Endothelial cell of umbilical vein (primary cell): ENCODE measurements at regions of chr3 and their contacts with region 1.

Region 1: GRCh38 chr3:69410250-69410649 is 24.4 kb upstream of the FRMD4B start:
- DNase-seq: peak; percentile 89
- H3K4me3 ChIP-seq: no peak overlapping the region
- H3K27ac ChIP-seq: no peak overlapping the region
- H3K4me1 ChIP-seq: peaks cover 27% of the 10 kb centered on the region
- H3K27me3 ChIP-seq: no peaks in the 10 kb centered on the region
- CTCF ChIP-seq: peak; percentile 83 to 90
- POLR2A ChIP-seq: no peak

Region 2: GRCh38 chr3:69051756-69052471 is 358.3 kb before region 1 on chr3 and contains the start of gene TMF1:
- CTCF ChIA-PET with region 1: no interaction called
- POLR2A ChIA-PET with region 1: no interaction called
- dilution Hi-C with region 1: no loop called
- intact Hi-C with region 1: no loop called
- DNase-seq: peak; percentile 99
- H3K4me3 ChIP-seq: peak within 1 kb of the TSS; percentile 47 to 94 (median 85)
- H3K27ac ChIP-seq: peak within 1 kb of the TSS; percentile 76
- H3K4me1 ChIP-seq: peaks cover 14% of the 10 kb centered on the region
- H3K27me3 ChIP-seq: no peaks in the 10 kb centered on the region
- CTCF ChIP-seq: no peak
- POLR2A ChIP-seq: peak; percentile 84
- total RNA-seq, gene TMF1: 32.3 and 32.7 TPM in 2 replicates

Region 3: GRCh38 chr3:69226076-69226475 is 184.2 kb before region 1 on chr3:
- CTCF ChIA-PET with region 1: no interaction called
- POLR2A ChIA-PET with region 1: no interaction called
- dilution Hi-C with region 1: no loop called
- intact Hi-C with region 1: no loop called
- DNase-seq: no peak
- H3K4me3 ChIP-seq: no peak overlapping the region
- H3K27ac ChIP-seq: no peak overlapping the region
- H3K4me1 ChIP-seq: no peaks in the 10 kb centered on the region
- H3K27me3 ChIP-seq: no peaks in the 10 kb centered on the region
- CTCF ChIP-seq: no peak
- POLR2A ChIP-seq: no peak

Region 4: GRCh38 chr3:69240651-69241568 is 169.3 kb before region 1 on chr3:
- CTCF ChIA-PET with region 1: no interaction called
- POLR2A ChIA-PET with region 1: interaction called, 3 read pairs
- dilution Hi-C with region 1: no loop called
- intact Hi-C with region 1: loop called (anchors 5 kb)
- DNase-seq: peak; percentile 80
- H3K4me3 ChIP-seq: no peak overlapping the region
- H3K27ac ChIP-seq: peak overlapping the region; percentile 90
- H3K4me1 ChIP-seq: peaks cover 66% of the 10 kb centered on the region
- H3K27me3 ChIP-seq: no peaks in the 10 kb centered on the region
- CTCF ChIP-seq: no peak
- POLR2A ChIP-seq: no peak

Region 5: DNA sequence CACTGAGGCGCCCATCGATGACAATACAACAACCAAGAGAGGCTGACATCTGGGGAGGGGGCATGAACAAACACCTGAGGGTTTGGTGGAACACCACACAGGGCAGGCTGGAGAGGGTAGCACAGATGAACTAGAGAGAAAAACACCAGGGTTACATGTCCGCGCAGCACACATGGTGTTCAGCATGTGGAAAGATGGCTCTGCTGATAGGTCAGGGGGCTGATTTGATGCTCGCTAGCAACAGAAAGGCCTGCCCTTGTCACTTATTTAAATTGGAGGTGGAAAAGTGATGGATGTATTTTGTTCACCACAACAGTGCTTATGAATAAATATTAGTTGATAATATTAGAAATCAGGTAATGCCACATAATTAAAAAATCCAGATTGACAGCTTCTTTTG is 91.8 kb before region 1 on chr3:
- CTCF ChIA-PET with region 1: interaction called, 16 read pairs
- POLR2A ChIA-PET with region 1: interaction called, 3 read pairs
- dilution Hi-C with region 1: no loop called
- intact Hi-C with region 1: no loop called
- DNase-seq: no peak
- H3K4me3 ChIP-seq: no peak overlapping the region
- H3K27ac ChIP-seq: no peak overlapping the region
- H3K4me1 ChIP-seq: peaks cover 3% of the 10 kb centered on the region
- H3K27me3 ChIP-seq: no peaks in the 10 kb centered on the region
- CTCF ChIP-seq: no peak
- POLR2A ChIP-seq: no peak

Region 6: DNA sequence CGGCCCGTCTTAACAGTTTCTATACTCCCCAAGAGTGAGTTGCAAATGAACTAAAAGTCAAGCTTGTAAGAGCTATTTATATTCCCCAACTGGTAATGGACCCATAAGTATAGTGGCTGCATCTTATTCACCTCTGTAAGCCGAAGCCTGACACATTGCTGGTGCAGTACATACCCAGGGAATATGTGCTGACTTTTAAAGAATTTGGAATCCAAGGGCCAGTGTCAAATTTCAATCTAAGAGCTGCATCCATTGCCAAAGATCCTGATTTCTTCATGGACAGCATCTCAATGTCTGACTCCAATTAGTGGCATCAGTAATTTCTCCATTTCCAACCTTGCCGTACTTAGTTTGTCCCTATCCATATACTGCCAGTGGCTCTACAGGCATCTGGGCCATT is 66.4 kb before region 1 on chr3:
- CTCF ChIA-PET with region 1: interaction called, 10 read pairs
- POLR2A ChIA-PET with region 1: no interaction called
- dilution Hi-C with region 1: no loop called
- intact Hi-C with region 1: no loop called
- DNase-seq: no peak
- H3K4me3 ChIP-seq: no peak overlapping the region
- H3K27ac ChIP-seq: no peak overlapping the region
- H3K4me1 ChIP-seq: peaks cover 9% of the 10 kb centered on the region
- H3K27me3 ChIP-seq: no peaks in the 10 kb centered on the region
- CTCF ChIP-seq: no peak
- POLR2A ChIP-seq: no peak

Region 7: GRCh38 chr3:69378112-69378802 is 32.0 kb before region 1 on chr3:
- CTCF ChIA-PET with region 1: interaction called, 11 read pairs
- POLR2A ChIA-PET with region 1: no interaction called
- dilution Hi-C with region 1: no loop called
- intact Hi-C with region 1: loop called (anchors 5 kb)
- DNase-seq: no peak
- H3K4me3 ChIP-seq: no peak overlapping the region
- H3K27ac ChIP-seq: no peak overlapping the region
- H3K4me1 ChIP-seq: no peaks in the 10 kb centered on the region
- H3K27me3 ChIP-seq: no peaks in the 10 kb centered on the region
- CTCF ChIP-seq: no peak
- POLR2A ChIP-seq: no peak

Region 8: GRCh38 chr3:69439643-69440270 is 29.5 kb after region 1 on chr3:
- CTCF ChIA-PET with region 1: interaction called, 16 read pairs
- POLR2A ChIA-PET with region 1: no interaction called
- dilution Hi-C with region 1: no loop called
- intact Hi-C with region 1: no loop called
- DNase-seq: peak; percentile 61
- H3K4me3 ChIP-seq: no peak overlapping the region
- H3K27ac ChIP-seq: no peak overlapping the region
- H3K4me1 ChIP-seq: no peaks in the 10 kb centered on the region
- H3K27me3 ChIP-seq: no peaks in the 10 kb centered on the region
- CTCF ChIP-seq: peak; percentile 41 to 58
- POLR2A ChIP-seq: no peak

Region 9: DNA sequence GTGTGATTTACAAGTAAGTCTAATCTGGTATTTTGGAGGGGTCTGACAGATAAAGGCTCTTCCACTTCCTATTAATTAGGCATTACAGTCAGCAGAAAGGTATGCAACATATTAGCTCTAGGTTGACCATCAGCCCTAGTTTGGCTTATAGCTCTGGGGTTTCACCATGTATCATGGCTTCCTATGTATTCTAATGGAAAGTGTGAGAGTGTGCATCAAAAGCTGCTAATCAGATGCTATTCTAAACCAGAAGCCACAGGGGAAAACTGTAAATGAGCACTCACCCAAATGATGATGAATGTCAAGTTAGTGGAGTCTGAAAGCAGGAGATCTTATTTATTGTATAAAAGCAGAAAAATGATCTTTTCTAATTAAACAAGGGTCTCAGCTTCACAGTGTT is 179.9 kb after region 1 on chr3:
- CTCF ChIA-PET with region 1: no interaction called
- POLR2A ChIA-PET with region 1: no interaction called
- dilution Hi-C with region 1: no loop called
- intact Hi-C with region 1: no loop called
- DNase-seq: no peak
- H3K4me3 ChIP-seq: no peak overlapping the region
- H3K27ac ChIP-seq: no peak overlapping the region
- H3K4me1 ChIP-seq: no peaks in the 10 kb centered on the region
- H3K27me3 ChIP-seq: peaks cover 0 to 13% of the 10 kb centered on the region in 2 experiments
- CTCF ChIP-seq: no peak
- POLR2A ChIP-seq: no peak